ENCODE measurements at regions of chr17 and their contacts with region 1.

Region 1: GRCh38 chr17:65100316-65101140 is 36.6 kb upstream of the RGS9 start:
- H3K4me3 Mint-ChIP-seq: peak overlapping the region; percentile 78
- H3K27ac Mint-ChIP-seq: peak overlapping the region; percentile 83
- H3K4me1 Mint-ChIP-seq: peaks cover 10% of the 10 kb centered on the region
- H3K27me3 Mint-ChIP-seq: peaks cover 3% of the 10 kb centered on the region

Region 2: GRCh38 chr17:64968652-64969501 is 131.7 kb before region 1 on chr17:
- intact Hi-C with region 1: loop called (anchors 5 kb)
- H3K4me3 Mint-ChIP-seq: no peak overlapping the region
- H3K27ac Mint-ChIP-seq: no peak overlapping the region
- H3K4me1 Mint-ChIP-seq: peaks cover 12% of the 10 kb centered on the region
- H3K27me3 Mint-ChIP-seq: no peaks in the 10 kb centered on the region

Region 3: DNA sequence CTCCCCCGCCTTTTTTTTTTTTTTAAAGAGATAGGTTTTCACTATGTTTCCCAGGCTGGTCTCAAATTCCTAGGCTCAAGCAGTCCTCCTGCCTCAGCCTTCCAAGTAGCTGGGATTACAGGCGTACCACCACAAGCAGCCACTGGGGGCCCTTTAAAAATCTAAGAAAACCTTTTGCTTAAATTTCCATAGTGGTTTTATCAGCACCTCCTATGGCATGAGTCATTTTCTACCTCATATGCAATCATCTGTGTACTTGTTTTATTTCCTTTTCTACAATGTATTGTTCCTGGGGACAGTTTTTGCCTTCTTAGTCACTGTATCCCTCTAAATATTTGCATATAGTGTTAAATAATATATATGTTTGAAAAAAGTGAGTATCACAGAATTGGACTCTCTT is 73.2 kb before region 1 on chr17:
- intact Hi-C with region 1: loop called (anchors 10 kb)
- H3K4me3 Mint-ChIP-seq: no peak overlapping the region
- H3K27ac Mint-ChIP-seq: peak overlapping the region; percentile 41
- H3K4me1 Mint-ChIP-seq: peaks cover 71% of the 10 kb centered on the region
- H3K27me3 Mint-ChIP-seq: no peaks in the 10 kb centered on the region

Region 4: GRCh38 chr17:65055348-65056261 is 44.9 kb before region 1 on chr17:
- intact Hi-C with region 1: loop called (anchors 5 kb)
- H3K4me3 Mint-ChIP-seq: peak overlapping the region; percentile 90
- H3K27ac Mint-ChIP-seq: peak overlapping the region; percentile 99
- H3K4me1 Mint-ChIP-seq: peaks cover 71% of the 10 kb centered on the region
- H3K27me3 Mint-ChIP-seq: no peaks in the 10 kb centered on the region

Region 5: DNA sequence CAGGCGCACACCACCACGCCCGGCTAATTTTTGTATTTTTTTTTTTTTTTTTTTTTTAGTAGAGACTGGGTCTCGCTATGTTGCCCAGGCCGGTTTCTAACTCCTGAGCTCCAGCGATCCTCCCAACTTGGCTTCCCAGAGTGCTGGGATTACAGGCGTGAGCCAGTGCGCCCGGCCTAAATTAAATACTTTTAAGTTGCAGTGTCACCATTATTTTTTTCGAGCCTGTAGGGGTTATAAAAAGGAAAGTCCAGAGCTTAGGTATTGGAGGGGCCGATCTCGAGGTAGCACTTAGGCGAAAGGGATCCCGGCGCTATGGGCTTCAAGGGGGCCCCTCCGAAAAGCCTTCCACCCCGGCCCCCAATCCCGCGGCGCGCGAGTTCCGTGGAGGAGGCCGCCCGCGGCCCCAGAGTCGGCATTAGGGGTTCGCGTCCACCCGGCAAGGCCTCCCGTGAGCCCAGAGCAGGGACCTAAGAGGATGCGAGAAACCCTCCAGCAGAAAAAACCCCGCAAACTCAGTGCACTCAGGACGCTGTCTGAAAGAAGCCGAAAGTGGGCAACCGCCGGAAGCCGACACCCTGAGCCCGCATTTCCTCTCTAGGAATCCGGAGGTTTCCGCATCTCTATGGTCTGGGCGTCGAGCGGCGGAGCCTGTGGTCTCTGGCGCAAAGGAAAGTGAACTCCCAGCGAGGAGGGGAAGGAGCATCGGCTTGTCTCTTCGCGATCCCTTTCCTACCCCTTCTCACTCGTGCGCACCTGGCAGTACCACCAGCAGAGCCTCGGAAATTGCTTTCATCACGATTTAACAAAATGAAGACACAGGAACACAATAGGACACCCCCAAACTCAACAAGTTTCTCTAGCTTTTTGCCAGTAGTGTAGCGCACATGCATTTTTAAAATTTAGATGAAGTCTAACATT is 22.6 kb after region 1 on chr17:
- intact Hi-C with region 1: no loop called
- H3K4me3 Mint-ChIP-seq: peak overlapping the region; percentile 90
- H3K27ac Mint-ChIP-seq: peak overlapping the region; percentile 98
- H3K4me1 Mint-ChIP-seq: peaks cover 20% of the 10 kb centered on the region
- H3K27me3 Mint-ChIP-seq: peaks cover 11% of the 10 kb centered on the region

Measured in dendritic cell treated with granulocyte-macrophage colony-stimulating factor and Interleukin-4, amounts not matched to agents 40 ng/mL and 50 ng/mL, for 4 days (primary cell).